Activated CD4-positive, alpha-beta memory T cell treated with anti-CD3 and anti-CD28 coated beads, Interleukin-2, amount 10 ng/mL, durations not matched to agents 7 days and 5 days (primary cell): ENCODE measurements at regions of chr4 and their contacts with region 1.

Region 1: DNA sequence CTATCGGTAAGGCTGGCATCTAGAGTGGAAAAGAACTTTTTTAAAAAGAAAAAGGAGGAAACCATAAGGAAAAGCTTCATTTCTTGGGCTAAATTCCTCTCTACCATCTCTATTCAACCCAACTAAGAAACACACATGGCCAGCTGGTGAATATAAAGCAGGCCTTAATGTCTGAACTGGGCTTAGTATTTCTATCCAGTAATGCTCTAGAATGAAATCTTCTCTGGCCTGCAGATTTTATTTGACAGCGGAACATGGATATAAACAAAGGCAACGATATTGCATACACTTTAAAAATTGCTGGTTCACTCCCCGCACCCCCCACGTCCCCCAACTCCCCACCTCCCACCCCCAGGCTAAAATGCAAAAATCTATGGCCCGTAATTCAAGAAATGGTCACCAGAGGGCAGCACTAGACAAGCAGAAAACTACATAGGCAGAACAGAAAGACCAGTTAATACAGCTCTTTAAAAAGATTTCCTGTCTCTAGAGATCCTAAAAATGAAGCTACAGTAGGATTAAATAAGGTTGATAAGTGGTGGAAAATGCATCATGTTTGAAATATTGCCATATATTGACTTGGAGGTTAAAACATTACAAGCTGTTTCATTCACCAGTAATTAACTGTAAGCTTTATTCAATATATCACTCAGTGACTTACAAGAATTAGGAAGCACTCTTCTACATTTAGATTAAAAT is 155.2 kb upstream of the GALNT7 start:
- DNase-seq: peak; percentile 46
- H3K4me3 Mint-ChIP-seq: no peak overlapping the region
- H3K27ac Mint-ChIP-seq: no peak overlapping the region
- H3K4me1 Mint-ChIP-seq: peaks cover 3% of the 10 kb centered on the region
- H3K27me3 Mint-ChIP-seq: peaks cover 7% of the 10 kb centered on the region

Region 2: DNA sequence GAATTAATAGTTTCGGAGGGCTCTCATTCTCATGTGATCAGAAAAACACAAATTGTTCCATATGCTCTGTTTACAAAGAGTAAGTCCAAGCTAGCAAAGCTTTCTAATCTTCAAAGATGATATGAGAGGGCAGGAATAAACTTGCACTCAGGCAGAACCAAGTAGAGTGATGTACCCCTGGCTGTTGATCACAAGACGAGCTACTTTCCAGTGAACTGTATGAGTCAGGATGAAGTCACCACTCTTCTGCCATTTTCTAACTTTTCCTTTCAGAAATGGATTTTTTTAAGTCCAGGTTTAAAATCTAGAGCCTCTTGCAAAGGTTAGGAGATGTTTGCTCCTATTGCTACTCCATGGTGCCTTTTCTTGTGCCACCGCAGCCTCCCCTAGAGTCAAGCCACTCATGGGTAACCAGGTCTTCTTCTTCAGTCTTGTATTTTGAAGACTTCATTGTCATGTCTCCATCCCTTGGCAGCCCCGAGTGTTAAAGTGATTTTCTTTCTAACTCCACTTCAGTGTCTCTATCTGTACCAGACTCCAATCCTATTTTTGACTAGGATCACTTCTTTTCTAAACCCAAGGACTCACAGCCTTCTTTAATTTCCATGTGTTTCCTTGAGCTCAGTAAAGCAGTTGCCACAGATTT is 16.7 kb before region 1 on chr4:
- CTCF ChIA-PET with region 1: no interaction called
- POLR2A ChIA-PET with region 1: no interaction called
- DNase-seq: no peak
- H3K4me3 Mint-ChIP-seq: no peak overlapping the region
- H3K27ac Mint-ChIP-seq: no peak overlapping the region
- H3K4me1 Mint-ChIP-seq: no peaks in the 10 kb centered on the region
- H3K27me3 Mint-ChIP-seq: peaks cover 13% of the 10 kb centered on the region

Region 3: GRCh38 chr4:173025131-173025530 is 11.8 kb after region 1 on chr4:
- CTCF ChIA-PET with region 1: interaction called, 21 read pairs
- POLR2A ChIA-PET with region 1: no interaction called
- DNase-seq: no peak
- H3K4me3 Mint-ChIP-seq: no peak overlapping the region
- H3K27ac Mint-ChIP-seq: no peak overlapping the region
- H3K4me1 Mint-ChIP-seq: no peaks in the 10 kb centered on the region
- H3K27me3 Mint-ChIP-seq: peaks cover 2% of the 10 kb centered on the region

Region 4: DNA sequence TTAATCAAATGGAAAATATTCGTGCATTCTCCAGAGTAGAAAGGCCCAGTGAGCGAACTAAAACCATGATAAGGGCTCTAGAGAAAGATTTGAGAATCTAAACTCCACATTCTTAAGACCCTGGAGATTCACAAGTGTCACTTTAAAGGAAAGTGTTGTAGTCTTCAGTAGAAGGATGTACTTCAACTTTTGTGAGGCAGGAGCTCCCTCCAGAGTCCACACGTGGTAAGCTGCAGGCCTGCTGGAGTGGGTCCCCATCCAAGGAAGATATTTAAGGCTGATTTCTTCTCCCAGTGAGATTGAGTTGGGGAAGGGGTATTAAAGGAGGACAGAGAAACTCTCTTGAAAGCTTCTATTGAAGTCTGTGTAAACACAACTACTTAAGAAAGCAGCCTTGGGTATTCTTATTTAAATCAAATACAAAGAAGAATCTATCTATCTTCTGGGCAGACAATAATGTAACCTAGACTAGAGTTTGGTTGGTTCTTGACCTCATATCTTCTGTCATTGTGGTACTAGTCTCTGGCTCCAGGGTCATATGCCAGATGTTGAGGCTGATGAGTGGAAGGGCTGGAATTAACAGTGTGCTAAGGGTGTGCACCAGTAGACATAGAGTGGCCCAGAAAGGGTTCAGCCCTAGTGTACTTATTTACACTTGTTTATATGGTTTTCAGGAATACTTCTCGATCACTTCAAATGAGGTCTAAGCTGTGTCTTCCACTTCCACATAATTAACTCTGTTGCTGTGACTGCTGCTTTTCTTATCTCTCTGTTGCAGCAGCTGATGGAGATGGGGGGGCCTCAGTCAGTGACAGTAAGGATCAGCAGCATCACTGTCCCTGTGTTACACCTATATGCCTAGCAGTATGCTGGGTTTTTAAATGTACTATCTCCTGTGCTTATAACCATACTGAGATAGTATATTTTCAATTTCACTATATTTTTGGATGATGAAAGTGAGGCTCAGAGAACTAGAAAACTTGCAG is 244.6 kb after region 1 on chr4:
- CTCF ChIA-PET with region 1: interaction called, 69 read pairs
- POLR2A ChIA-PET with region 1: no interaction called
- DNase-seq: peak; percentile 59
- H3K4me3 Mint-ChIP-seq: no peak overlapping the region
- H3K27ac Mint-ChIP-seq: no peak overlapping the region
- H3K4me1 Mint-ChIP-seq: no peaks in the 10 kb centered on the region
- H3K27me3 Mint-ChIP-seq: no peaks in the 10 kb centered on the region

Region 5: GRCh38 chr4:173288296-173288695 is 274.9 kb after region 1 on chr4:
- CTCF ChIA-PET with region 1: interaction called, 12 read pairs
- POLR2A ChIA-PET with region 1: no interaction called
- DNase-seq: peak; percentile 78
- H3K4me3 Mint-ChIP-seq: peak overlapping the region; percentile 25
- H3K27ac Mint-ChIP-seq: peak overlapping the region; percentile 33
- H3K4me1 Mint-ChIP-seq: peaks cover 16% of the 10 kb centered on the region
- H3K27me3 Mint-ChIP-seq: no peaks in the 10 kb centered on the region